ENCODE measurements at regions of chr7 and their contacts with region 1.

Region 1: GRCh38 chr7:21371360-21371759 is 56.5 kb upstream of the SP4 start:
- DNase-seq: no peak
- H3K4me3 Mint-ChIP-seq: no peak overlapping the region
- H3K27ac Mint-ChIP-seq: no peak overlapping the region
- H3K4me1 Mint-ChIP-seq: peaks cover 26% of the 10 kb centered on the region
- H3K27me3 Mint-ChIP-seq: no peaks in the 10 kb centered on the region

Region 2: DNA sequence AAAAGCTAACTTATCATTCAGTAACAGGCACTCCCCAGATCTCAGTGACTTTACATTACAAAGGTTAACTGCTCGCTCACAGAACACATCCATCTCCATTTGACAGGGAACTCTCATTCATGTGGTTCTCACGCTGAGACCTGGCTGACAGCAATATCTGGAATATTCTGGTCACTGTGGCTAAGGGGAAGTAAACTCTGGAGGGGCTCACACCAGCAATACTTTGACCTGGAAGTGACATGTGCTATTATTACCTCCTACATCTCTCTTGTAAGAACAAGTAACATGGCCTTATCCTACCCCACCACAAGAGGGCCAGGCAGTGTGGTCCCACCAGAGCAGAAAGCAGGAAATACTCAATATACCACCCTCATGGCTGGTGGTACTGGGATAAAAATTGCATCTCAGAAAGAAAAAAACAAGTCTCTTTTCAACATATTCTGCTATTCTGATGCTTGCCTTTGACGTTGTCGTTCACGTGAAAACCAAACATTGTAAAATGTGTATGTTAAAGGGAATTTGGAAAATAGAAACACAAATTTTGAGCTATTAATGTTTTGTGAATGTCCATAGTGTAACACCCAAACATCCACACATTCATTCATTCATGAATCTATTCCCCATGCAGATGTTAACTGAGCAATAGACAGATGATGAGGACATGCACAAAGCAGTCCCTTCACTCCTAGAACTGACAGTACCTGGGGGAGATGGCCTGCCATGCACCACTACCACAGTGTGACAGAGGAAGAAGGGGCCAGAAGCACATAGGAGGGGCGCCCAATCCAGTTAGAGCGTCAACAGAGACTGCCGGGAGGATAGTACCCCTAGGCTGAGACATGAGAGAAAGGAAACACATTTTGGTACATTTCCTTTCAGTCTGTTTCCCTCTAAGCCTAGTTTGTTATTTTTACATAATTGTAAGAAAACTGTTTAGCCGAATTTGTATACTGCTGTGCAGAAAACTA is 109.4 kb before region 1 on chr7:
- intact Hi-C with region 1: loop called (anchors 5 kb)
- DNase-seq: peak; percentile 28
- H3K4me3 Mint-ChIP-seq: no peak overlapping the region
- H3K27ac Mint-ChIP-seq: no peak overlapping the region
- H3K4me1 Mint-ChIP-seq: peaks cover 10% of the 10 kb centered on the region
- H3K27me3 Mint-ChIP-seq: peaks cover 12% of the 10 kb centered on the region

Measured in activated T-helper 2 cell treated with anti-CD3 and anti-CD28 coated beads, Interferon-gamma antibody, Interleukin-2, Interleukin-4, amounts not matched to agents 10 μg/mL and 5 μg/mL and 100 μg/mL, durations not matched to agents 14 hours and 24 hours and 36 hours (primary cell).